CD8-positive, alpha-beta memory T cell (primary cell): ENCODE measurements at regions of chr12 and their contacts with region 1.

Region 1: GRCh38 chr12:12696562-12697383 is 790 bp upstream of the GPR19 start:
- DNase-seq: peak; percentile 87 to 96 (median 93)
- H3K4me3 ChIP-seq: peak overlapping the region; percentile 80
- H3K4me3 Mint-ChIP-seq: peak overlapping the region; percentile 87 to 99 (median 94)
- H3K27ac ChIP-seq: peak overlapping the region; percentile 98
- H3K27ac Mint-ChIP-seq: peak overlapping the region; percentile 99 to 100 (median 100)
- H3K4me1 ChIP-seq: peaks cover 19% of the 10 kb centered on the region
- H3K4me1 Mint-ChIP-seq: peaks cover 26 to 40% (median 32%) of the 10 kb centered on the region in 3 donors
- H3K27me3 ChIP-seq: no peaks in the 10 kb centered on the region
- H3K27me3 Mint-ChIP-seq: no peaks in the 10 kb centered on the region

Region 2: GRCh38 chr12:12334367-12335040 is 362.3 kb before region 1 on chr12:
- CTCF ChIA-PET with region 1: no interaction called
- POLR2A ChIA-PET with region 1: no interaction called
- DNase-seq: peak; percentile 50 to 69 (median 59)
- H3K4me3 ChIP-seq: no peak overlapping the region
- H3K4me3 Mint-ChIP-seq: peak overlapping the region in 2 of 7 donors; percentile 7 to 15
- H3K27ac ChIP-seq: no peak overlapping the region
- H3K27ac Mint-ChIP-seq: peak overlapping the region in 1 of 8 donors; percentile 29
- H3K4me1 ChIP-seq: peaks cover 6% of the 10 kb centered on the region
- H3K4me1 Mint-ChIP-seq: peaks cover 8 to 15% (median 14%) of the 10 kb centered on the region in 3 donors
- H3K27me3 ChIP-seq: no peaks in the 10 kb centered on the region
- H3K27me3 Mint-ChIP-seq: peaks cover 1 to 7% of the 10 kb centered on the region in 2 donors

Region 3: GRCh38 chr12:12684375-12685106 is 12.2 kb before region 1 on chr12:
- CTCF ChIA-PET with region 1: interaction called, 3 read pairs
- POLR2A ChIA-PET with region 1: interaction called, 10 read pairs
- DNase-seq: no peak
- H3K4me3 ChIP-seq: no peak overlapping the region
- H3K4me3 Mint-ChIP-seq: no peak overlapping the region
- H3K27ac ChIP-seq: no peak overlapping the region
- H3K27ac Mint-ChIP-seq: no peak overlapping the region
- H3K4me1 ChIP-seq: peaks cover 5% of the 10 kb centered on the region
- H3K4me1 Mint-ChIP-seq: peaks cover 0 to 8% (median 0%) of the 10 kb centered on the region in 3 donors
- H3K27me3 ChIP-seq: no peaks in the 10 kb centered on the region
- H3K27me3 Mint-ChIP-seq: no peaks in the 10 kb centered on the region

Region 4: GRCh38 chr12:12716793-12717585 is 20.2 kb after region 1 on chr12 and contains the start of gene CDKN1B:
- CTCF ChIA-PET with region 1: interaction called, 13 read pairs
- POLR2A ChIA-PET with region 1: interaction called, 168 read pairs
- DNase-seq: peak; percentile 82 to 92 (median 87)
- H3K4me3 ChIP-seq: peak within 1 kb of the TSS; percentile 96
- H3K4me3 Mint-ChIP-seq: peak within 1 kb of the TSS; percentile 92 to 99 (median 99)
- H3K27ac ChIP-seq: peak within 1 kb of the TSS; percentile 98
- H3K27ac Mint-ChIP-seq: peak within 1 kb of the TSS; percentile 96 to 100 (median 98)
- H3K4me1 ChIP-seq: peaks cover 37% of the 10 kb centered on the region
- H3K4me1 Mint-ChIP-seq: peaks cover 52 to 68% (median 62%) of the 10 kb centered on the region in 3 donors
- H3K27me3 ChIP-seq: no peaks in the 10 kb centered on the region
- H3K27me3 Mint-ChIP-seq: peaks cover 0 to 2% of the 10 kb centered on the region in 2 donors
- total RNA-seq, gene CDKN1B: 47.1 to 48.7 TPM

Region 5: GRCh38 chr12:12724661-12725545 is 28.1 kb after region 1 on chr12:
- CTCF ChIA-PET with region 1: no interaction called
- POLR2A ChIA-PET with region 1: interaction called, 42 read pairs
- DNase-seq: peak; percentile 82 to 96 (median 94)
- H3K4me3 ChIP-seq: peak overlapping the region; percentile 46
- H3K4me3 Mint-ChIP-seq: peak overlapping the region; percentile 89 to 99 (median 96)
- H3K27ac ChIP-seq: peak overlapping the region; percentile 98
- H3K27ac Mint-ChIP-seq: peak overlapping the region; percentile 92 to 99 (median 95)
- H3K4me1 ChIP-seq: peaks cover 44% of the 10 kb centered on the region
- H3K4me1 Mint-ChIP-seq: peaks cover 56 to 64% (median 56%) of the 10 kb centered on the region in 3 donors
- H3K27me3 ChIP-seq: no peaks in the 10 kb centered on the region
- H3K27me3 Mint-ChIP-seq: peaks cover 0 to 11% of the 10 kb centered on the region in 2 donors